Dendritic cell treated with granulocyte-macrophage colony-stimulating factor and Interleukin-4, amounts not matched to agents 40 ng/mL and 50 ng/mL, for 4 days (primary cell): ENCODE measurements at regions of chr2 and their contacts with region 1.

Region 1: DNA sequence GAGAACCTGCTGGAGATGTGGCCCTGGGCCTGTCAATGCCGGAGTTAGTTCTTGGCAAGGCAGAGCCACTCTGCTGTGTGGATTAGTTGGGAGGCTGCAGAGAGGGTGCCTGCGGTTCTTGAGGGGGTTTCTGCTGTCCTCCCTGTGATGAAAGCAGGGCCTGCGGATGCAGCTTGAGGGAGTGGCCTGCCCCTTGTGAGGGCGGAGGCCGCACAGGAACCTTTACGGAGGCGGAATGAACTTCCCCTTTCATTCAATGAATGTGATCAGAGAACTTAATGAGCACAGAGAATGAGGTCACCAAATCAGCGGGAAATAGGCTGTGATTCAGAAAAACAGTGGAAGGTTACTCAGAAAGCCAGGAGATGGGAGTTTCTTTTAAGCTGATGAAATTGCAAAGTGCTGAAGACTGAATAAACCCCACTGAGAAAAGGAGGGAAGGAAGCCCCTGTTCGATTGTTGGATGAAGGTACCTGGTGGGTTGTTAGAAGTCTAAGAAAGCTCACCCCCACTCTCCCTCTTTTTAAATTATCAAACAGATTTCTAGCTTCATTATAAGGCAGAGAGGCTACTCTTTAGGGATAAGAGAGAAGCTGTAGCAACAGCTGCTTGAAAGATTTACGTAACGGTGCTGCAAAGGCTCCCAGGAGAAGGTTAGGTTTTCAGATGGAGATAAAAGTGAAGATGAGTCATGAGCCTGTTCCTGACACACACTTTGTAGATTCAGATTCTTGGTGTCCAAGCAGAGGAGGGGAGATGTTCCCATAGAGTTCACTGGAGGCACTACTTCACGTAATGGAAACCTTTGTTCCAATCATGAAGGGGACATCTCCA is 47.4 kb downstream of the VWA3B start:
- H3K4me3 Mint-ChIP-seq: no peak overlapping the region
- H3K27ac Mint-ChIP-seq: no peak overlapping the region
- H3K4me1 Mint-ChIP-seq: peaks cover 37% of the 10 kb centered on the region
- H3K27me3 Mint-ChIP-seq: peaks cover 83% of the 10 kb centered on the region

Region 2: DNA sequence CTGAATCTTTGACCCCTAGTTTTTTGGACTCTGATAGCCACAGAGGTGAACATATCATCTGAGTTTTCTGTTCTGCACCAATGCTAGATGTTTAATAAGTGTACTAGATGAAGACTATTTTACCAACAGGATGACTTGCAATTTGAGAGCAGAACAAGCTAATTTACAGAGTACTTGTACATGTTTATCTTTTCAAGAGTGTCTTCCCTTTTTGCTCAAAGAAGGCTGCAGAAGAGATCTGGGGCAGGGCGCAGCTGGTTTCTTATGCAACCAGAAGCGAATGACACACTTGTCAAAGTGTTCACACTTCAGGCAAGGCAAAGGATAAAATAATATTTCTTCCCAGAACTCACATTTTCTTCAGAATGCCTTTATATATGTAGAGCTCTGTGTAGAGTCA is 38.6 kb after region 1 on chr2:
- intact Hi-C with region 1: loop called (anchors 5 kb)
- H3K4me3 Mint-ChIP-seq: no peak overlapping the region
- H3K27ac Mint-ChIP-seq: no peak overlapping the region
- H3K4me1 Mint-ChIP-seq: peaks cover 47% of the 10 kb centered on the region
- H3K27me3 Mint-ChIP-seq: peaks cover 87% of the 10 kb centered on the region